CD4-positive, alpha-beta T cell (primary cell): ENCODE measurements at regions of chr1 and their contacts with region 1.

Region 1: DNA sequence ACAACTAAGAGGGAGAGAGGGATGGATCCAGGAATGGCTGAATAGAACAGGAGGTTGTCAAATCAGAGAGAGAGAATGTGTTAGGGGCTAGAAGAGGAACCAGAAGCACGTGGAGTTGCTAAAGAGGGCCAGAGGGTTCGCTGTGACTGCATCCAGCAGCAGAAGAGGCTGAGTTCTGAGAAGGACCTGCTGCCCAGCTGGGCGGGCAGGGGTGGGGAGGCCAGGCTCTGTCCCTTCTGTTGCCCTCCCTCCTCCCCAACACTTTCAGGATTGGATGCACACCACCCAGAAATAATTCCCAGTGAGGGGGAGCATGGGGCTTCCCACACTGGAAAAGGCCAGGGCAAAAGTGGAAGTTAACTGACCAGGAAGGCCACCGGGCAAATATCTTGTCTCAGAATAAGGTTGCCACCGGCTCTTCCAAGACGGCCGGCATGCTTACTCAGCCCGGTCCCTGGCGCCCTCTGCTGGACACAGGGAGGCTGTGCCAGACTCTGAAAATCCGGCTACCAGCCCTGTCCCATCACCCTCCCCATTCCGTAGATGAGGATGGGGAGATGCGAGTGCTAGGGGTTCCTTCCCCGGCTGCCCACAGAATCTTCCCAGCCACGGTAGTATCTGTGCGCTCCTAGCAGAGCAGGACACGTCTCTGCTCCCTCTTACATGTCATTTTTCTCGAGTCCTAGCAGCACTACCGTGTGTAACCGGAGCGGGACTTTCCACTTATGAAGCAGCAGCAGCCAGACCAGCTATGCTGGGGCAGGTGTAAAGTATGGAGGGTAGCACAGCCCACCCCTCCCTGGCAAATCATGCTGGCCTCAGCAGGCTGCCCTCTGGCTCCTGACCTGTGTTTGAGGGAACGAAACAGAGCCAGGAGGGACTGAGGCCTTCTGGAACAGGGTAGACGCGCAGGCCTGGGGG is 46.8 kb upstream of the A3GALT2 start:
- DNase-seq: peak; percentile 77 to 93 (median 86)
- ATAC-seq: peak; percentile 99
- H3K4me3 ChIP-seq: no peak overlapping the region
- H3K4me3 Mint-ChIP-seq: no peak overlapping the region
- H3K27ac ChIP-seq: no peak overlapping the region
- H3K27ac Mint-ChIP-seq: no peak overlapping the region
- H3K4me1 ChIP-seq: peaks cover 9% of the 10 kb centered on the region
- H3K4me1 Mint-ChIP-seq: no peaks in the 10 kb centered on the region
- H3K27me3 ChIP-seq: peaks cover 0 to 4% of the 10 kb centered on the region in 2 experiments
- H3K27me3 Mint-ChIP-seq: no peaks in the 10 kb centered on the region
- CTCF ChIP-seq: peak; percentile 97

Region 2: GRCh38 chr1:33094971-33095604 is 272.7 kb before region 1 on chr1:
- CTCF ChIA-PET with region 1: no interaction called
- POLR2A ChIA-PET with region 1: no interaction called
- intact Hi-C with region 1: loop called in 1 of 2 experiments (anchors 5 kb)
- DNase-seq: peak in 4 of 14 experiments; percentile 11 to 54 (median 52)
- ATAC-seq: no peak
- H3K4me3 ChIP-seq: no peak overlapping the region
- H3K4me3 Mint-ChIP-seq: no peak overlapping the region
- H3K27ac ChIP-seq: no peak overlapping the region
- H3K27ac Mint-ChIP-seq: no peak overlapping the region
- H3K4me1 ChIP-seq: peaks cover 34% of the 10 kb centered on the region
- H3K4me1 Mint-ChIP-seq: peaks cover 36% of the 10 kb centered on the region
- H3K27me3 ChIP-seq: no peaks in the 10 kb centered on the region
- H3K27me3 Mint-ChIP-seq: no peaks in the 10 kb centered on the region
- CTCF ChIP-seq: peak; percentile 99

Region 3: DNA sequence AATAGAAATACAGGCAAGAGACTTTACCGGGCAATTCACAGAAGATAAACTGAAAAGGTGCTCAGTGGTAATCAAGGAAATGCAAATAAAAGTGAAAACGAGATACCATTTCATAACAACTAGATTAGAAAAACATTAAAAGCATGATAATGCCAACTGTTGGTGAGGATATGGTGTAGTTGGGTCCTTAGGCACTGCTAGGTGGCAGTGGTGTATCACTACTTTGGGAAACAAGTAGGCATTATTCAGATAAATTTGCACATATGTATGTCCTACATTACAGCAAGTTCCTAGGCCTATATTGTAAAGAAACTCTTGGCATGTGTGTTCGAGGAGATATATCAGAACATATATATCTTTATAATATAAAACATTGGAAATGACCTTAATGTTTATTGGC is 255.8 kb before region 1 on chr1:
- CTCF ChIA-PET with region 1: no interaction called
- POLR2A ChIA-PET with region 1: no interaction called
- intact Hi-C with region 1: loop called (anchors 2 to 10 kb)
- DNase-seq: peak in 3 of 14 experiments; percentile 28 to 54 (median 54)
- ATAC-seq: peak; percentile 58
- H3K4me3 ChIP-seq: no peak overlapping the region
- H3K4me3 Mint-ChIP-seq: no peak overlapping the region
- H3K27ac ChIP-seq: no peak overlapping the region
- H3K27ac Mint-ChIP-seq: no peak overlapping the region
- H3K4me1 ChIP-seq: no peaks in the 10 kb centered on the region
- H3K4me1 Mint-ChIP-seq: no peaks in the 10 kb centered on the region
- H3K27me3 ChIP-seq: no peaks in the 10 kb centered on the region
- H3K27me3 Mint-ChIP-seq: no peaks in the 10 kb centered on the region
- CTCF ChIP-seq: peak; percentile 28

Region 4: DNA sequence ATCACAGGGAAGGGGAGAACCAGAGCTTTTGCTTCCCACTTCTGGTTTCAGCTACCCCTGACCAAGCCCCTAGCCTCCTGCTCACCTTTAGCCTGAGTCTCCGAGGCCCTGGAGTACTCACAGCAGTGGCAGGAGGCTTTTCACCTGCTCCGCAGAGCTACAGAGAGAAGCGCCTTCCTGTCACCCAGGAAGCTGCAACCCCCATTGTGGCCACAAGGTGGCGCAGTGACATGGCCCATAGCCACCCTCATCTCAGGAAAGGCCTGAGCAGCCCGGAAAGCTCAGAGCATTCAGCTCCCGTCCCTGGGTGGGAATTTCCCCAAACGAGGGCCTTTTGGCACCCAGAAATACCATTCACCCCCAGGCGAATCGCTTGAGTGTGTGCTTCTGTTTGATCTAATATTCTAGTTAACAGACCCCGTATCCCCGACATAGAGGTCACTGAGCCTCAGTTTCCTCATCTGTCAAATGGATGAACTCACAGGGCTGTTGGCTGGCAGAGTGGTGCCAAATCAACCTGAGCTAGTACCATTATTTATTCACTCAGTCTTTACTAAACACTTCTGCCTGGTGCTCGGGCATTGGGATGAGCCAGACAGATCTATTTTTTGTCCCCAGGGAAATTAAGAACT is 72.2 kb before region 1 on chr1:
- CTCF ChIA-PET with region 1: interaction called, 15 read pairs
- POLR2A ChIA-PET with region 1: no interaction called
- intact Hi-C with region 1: loop called (anchors 1 kb)
- DNase-seq: peak; percentile 74 to 91 (median 86)
- ATAC-seq: peak; percentile 93
- H3K4me3 ChIP-seq: no peak overlapping the region
- H3K4me3 Mint-ChIP-seq: no peak overlapping the region
- H3K27ac ChIP-seq: no peak overlapping the region
- H3K27ac Mint-ChIP-seq: peak overlapping the region; percentile 58
- H3K4me1 ChIP-seq: peaks cover 15% of the 10 kb centered on the region
- H3K4me1 Mint-ChIP-seq: peaks cover 23% of the 10 kb centered on the region
- H3K27me3 ChIP-seq: no peaks in the 10 kb centered on the region
- H3K27me3 Mint-ChIP-seq: no peaks in the 10 kb centered on the region
- CTCF ChIP-seq: peak; percentile 93

Region 5: GRCh38 chr1:33312413-33312749 is 55.4 kb before region 1 on chr1:
- CTCF ChIA-PET with region 1: no interaction called
- POLR2A ChIA-PET with region 1: no interaction called
- intact Hi-C with region 1: no loop called
- DNase-seq: no peak
- ATAC-seq: no peak
- H3K4me3 ChIP-seq: no peak overlapping the region
- H3K4me3 Mint-ChIP-seq: no peak overlapping the region
- H3K27ac ChIP-seq: no peak overlapping the region
- H3K27ac Mint-ChIP-seq: no peak overlapping the region
- H3K4me1 ChIP-seq: peaks cover 3% of the 10 kb centered on the region
- H3K4me1 Mint-ChIP-seq: peaks cover 3% of the 10 kb centered on the region
- H3K27me3 ChIP-seq: peaks cover 3% of the 10 kb centered on the region in 2 experiments
- H3K27me3 Mint-ChIP-seq: peaks cover 4% of the 10 kb centered on the region
- CTCF ChIP-seq: no peak